ENCODE measurements at regions of chr4 and their contacts with region 1.

Region 1: GRCh38 chr4:48779998-48780742 is at the start of gene FRYL:
- DNase-seq: peak; percentile 99
- ATAC-seq: peak; percentile 93
- H3K4me3 Mint-ChIP-seq: peak within 1 kb of the TSS; percentile 98
- H3K27ac Mint-ChIP-seq: peak within 1 kb of the TSS; percentile 98
- H3K4me1 Mint-ChIP-seq: peaks cover 42% of the 10 kb centered on the region
- H3K27me3 Mint-ChIP-seq: no peaks in the 10 kb centered on the region
- total RNA-seq, gene FRYL: 67.9 to 69.8 TPM

Region 2: GRCh38 chr4:48269861-48270522 is 510.2 kb before region 1 on chr4:
- CTCF ChIA-PET with region 1: no interaction called
- POLR2A ChIA-PET with region 1: no interaction called
- intact Hi-C with region 1: loop called in 1 of 2 experiments (anchors 1 kb)
- DNase-seq: peak; percentile 97
- ATAC-seq: peak; percentile 95
- H3K4me3 Mint-ChIP-seq: peak overlapping the region; percentile 89
- H3K27ac Mint-ChIP-seq: peak overlapping the region; percentile 93
- H3K4me1 Mint-ChIP-seq: peaks cover 17% of the 10 kb centered on the region
- H3K27me3 Mint-ChIP-seq: no peaks in the 10 kb centered on the region

Region 3: GRCh38 chr4:48681856-48682255 is 98.3 kb before region 1 on chr4:
- CTCF ChIA-PET with region 1: no interaction called
- POLR2A ChIA-PET with region 1: no interaction called
- intact Hi-C with region 1: loop called (anchors 1 to 5 kb)
- DNase-seq: peak; percentile 23
- ATAC-seq: peak; percentile 98
- H3K4me3 Mint-ChIP-seq: no peak overlapping the region
- H3K27ac Mint-ChIP-seq: no peak overlapping the region
- H3K4me1 Mint-ChIP-seq: peaks cover 42% of the 10 kb centered on the region
- H3K27me3 Mint-ChIP-seq: no peaks in the 10 kb centered on the region

Region 4: DNA sequence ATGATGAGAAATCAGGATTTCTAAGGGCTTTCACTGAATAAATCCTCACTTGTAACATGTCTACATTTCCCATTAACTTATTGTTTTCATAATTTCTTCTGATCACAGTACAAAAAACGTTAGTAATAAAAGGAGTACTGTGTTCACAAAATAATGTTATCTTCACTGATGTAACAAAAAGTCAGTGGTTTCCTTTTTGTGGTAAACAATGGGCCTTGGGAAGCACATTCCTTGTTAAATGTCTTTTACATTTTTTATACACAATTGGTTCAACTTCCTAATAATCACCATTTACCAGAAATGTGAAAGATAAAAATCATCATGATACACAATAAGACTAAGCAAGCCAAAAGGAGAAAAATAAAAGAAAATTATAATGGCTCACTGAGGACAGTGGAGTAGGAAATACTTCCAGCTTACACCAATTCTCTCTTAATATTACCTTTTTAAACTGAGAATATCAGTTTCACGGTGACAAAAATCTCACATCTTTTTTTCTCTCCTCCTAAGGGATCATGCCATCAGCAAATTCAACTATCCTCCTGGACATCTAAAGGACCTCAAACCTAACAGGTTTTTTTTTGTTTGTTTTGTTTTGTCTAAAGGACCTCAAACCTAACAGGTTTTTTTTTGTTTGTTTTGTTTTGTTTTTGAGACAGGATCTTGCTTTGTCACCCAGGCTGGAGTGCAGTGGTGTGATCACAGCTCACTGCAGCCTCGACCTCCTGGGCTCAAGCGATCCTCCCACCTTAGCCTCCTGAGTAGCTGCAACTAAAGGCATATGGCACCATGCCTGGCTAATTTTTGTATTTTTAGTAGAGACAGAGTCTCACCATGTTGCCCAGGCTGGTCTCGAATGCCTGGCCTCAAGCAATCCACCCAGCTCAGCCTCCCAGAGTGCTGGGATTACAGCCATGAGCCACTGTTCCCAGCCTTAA is 57.4 kb before region 1 on chr4:
- CTCF ChIA-PET with region 1: no interaction called
- POLR2A ChIA-PET with region 1: no interaction called
- intact Hi-C with region 1: loop called in 1 of 2 experiments (anchors 1 kb)
- DNase-seq: no peak
- ATAC-seq: no peak
- H3K4me3 Mint-ChIP-seq: no peak overlapping the region
- H3K27ac Mint-ChIP-seq: no peak overlapping the region
- H3K4me1 Mint-ChIP-seq: peaks cover 59% of the 10 kb centered on the region
- H3K27me3 Mint-ChIP-seq: no peaks in the 10 kb centered on the region

Region 5: GRCh38 chr4:48830706-48831531 is 50.7 kb after region 1 on chr4 and contains the start of gene OCIAD1:
- CTCF ChIA-PET with region 1: interaction called, 3 read pairs
- POLR2A ChIA-PET with region 1: interaction called, 4 read pairs
- intact Hi-C with region 1: loop called (anchors 1 kb)
- DNase-seq: peak; percentile 96
- ATAC-seq: peak; percentile 99
- H3K4me3 Mint-ChIP-seq: peak within 1 kb of the TSS; percentile 100
- H3K27ac Mint-ChIP-seq: peak within 1 kb of the TSS; percentile 100
- H3K4me1 Mint-ChIP-seq: peaks cover 23% of the 10 kb centered on the region
- H3K27me3 Mint-ChIP-seq: no peaks in the 10 kb centered on the region
- total RNA-seq, gene OCIAD1: 113 to 162 TPM

Measured in activated CD4-positive, alpha-beta T cell treated with anti-CD3 and anti-CD28 coated beads for 36 hours (primary cell).